MCF 10A (cell line): ENCODE measurements at regions of chr22 and their contacts with region 1.

Region 1: DNA sequence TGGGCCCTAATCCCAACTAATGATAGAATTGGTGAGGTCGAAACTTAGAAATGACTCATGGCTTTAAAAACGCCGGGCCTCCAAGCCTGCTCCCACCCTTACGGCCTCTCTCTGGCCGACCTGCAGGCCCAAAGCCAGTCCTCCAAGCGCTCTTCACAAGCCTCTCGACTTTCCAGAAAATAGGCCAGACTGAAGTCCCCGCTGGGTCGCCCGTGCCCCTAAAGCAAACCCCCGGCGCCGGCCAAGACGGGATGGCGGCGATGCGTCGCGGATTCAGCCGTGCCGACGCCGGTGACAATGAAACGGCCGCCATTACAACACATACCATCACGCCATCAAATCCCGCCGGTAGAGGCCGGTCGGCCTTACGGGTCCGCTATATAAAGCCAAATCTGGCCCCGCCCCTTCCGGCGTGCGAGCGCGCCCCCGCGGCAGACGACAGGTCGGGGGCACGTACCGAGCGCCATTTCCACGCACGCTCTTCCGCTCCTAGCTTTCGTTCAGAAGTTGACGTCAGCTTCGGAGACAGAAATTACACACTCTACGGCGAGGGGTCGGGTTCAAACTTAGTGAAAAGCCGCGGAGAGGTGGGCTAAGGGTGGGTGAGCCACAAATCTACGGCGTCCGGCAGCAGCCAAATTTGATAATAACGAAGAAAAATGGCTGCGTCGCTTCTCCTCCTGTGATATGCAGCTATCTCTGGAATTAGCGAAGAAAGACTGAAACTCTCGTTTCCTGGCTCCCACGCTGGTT is at the start of gene RPL3:
- DNase-seq: peak; percentile 98
- H3K4me3 Mint-ChIP-seq: peak within 1 kb of the TSS; percentile 99
- H3K27ac Mint-ChIP-seq: peak within 1 kb of the TSS; percentile 100
- H3K4me1 Mint-ChIP-seq: peaks cover 17% of the 10 kb centered on the region
- H3K27me3 Mint-ChIP-seq: no peaks in the 10 kb centered on the region
- CTCF ChIP-seq: no peak
- total RNA-seq, gene RPL3: 3,475 and 3,632 TPM in 2 replicates

Region 2: DNA sequence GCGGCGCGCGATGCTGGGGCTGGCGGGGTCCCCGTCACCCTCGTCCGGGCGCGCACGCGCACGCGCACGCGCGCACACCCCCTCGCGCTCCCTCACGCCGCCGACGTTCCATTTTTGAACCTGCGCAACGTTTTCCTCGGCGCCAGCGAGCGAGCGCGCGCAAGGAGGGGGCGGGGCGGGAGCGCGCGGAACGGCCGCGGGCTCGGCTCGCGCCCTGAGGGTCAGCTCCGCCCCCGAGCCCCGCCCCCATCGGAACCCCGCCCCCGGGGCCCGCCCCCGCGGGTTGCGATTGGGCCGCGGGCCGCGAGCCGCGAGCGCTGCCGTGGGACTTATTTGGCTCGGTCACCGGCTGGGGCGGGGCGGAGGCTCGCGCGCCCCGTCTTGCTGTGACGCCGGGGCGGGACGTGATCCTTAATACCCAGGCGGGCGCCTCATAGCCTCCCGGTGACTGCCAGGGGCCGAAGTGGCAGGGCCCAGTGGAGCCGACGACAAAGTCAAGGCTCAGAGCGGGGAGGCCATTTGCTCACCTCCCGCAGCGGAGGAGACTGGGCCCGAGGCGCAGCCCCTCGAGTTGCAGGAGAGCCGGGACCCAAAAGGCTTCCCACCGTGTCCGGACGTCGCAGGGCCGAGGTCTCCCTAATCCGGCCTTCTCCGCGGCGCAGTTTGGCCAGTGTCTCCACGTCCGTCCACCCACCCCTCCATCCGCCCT is 166.8 kb before region 1 on chr22 and contains the start of gene CBX7:
- CTCF ChIA-PET with region 1: interaction called, 4 read pairs
- POLR2A ChIA-PET with region 1: interaction called, 64 read pairs
- intact Hi-C with region 1: no loop called
- DNase-seq: peak; percentile 76
- H3K4me3 Mint-ChIP-seq: peak within 1 kb of the TSS; percentile 72
- H3K27ac Mint-ChIP-seq: no peak within 1 kb of the TSS
- H3K4me1 Mint-ChIP-seq: no peaks in the 10 kb centered on the region
- H3K27me3 Mint-ChIP-seq: peaks cover 36% of the 10 kb centered on the region
- CTCF ChIP-seq: no peak
- total RNA-seq, gene CBX7: 5.3 and 6.2 TPM in 2 replicates

Region 3: DNA sequence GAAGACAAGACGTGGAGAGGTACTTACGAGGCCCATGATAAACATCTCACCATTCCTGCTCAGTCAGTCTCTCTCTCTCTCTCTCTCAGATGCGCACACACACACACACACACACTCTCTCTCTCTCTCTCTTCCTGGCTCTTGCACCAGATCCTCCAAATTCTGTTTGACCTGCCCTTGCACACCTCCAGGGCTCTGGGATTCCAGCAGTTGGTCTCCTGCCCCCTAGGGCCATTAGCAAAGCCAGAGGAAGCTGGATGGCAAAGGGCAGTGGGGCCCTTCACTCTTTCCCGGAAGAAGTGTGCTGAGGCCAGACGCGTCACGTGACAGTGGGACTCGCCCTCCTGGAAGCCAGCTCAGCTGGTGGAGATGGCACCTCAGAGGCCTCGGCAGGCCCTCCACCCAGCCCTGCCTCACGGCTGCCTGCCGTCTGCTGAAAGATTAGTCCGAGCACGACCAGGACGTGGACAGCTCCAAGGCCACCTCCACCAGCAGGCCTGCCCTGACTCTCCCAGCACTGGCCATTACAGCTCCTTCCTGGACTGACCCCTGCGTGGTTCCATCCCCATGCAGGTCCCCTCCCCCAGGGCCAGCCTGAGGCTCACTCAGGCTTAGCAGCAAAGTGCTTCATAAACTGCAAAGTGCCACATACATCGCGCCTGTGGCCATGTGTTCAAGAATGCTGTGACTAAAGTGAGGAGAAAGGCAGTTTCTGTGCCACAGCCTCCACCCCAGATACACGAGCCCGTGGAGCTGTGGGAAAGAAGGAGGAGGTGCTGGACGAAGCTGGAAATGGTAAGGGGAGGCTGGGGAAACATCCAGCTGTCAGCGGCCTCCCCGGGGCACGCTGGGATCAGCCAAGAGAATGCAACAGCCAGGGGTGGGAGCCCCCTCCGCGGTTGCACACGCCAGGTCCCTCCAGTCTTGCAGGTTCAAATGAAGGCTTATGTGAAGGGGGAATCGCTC is 78.3 kb before region 1 on chr22:
- CTCF ChIA-PET with region 1: interaction called, 3 read pairs
- POLR2A ChIA-PET with region 1: interaction called, 36 read pairs
- intact Hi-C with region 1: no loop called
- DNase-seq: no peak
- H3K4me3 Mint-ChIP-seq: peak overlapping the region; percentile 45
- H3K27ac Mint-ChIP-seq: no peak overlapping the region
- H3K4me1 Mint-ChIP-seq: peaks cover 37% of the 10 kb centered on the region
- H3K27me3 Mint-ChIP-seq: peaks cover 34% of the 10 kb centered on the region
- CTCF ChIP-seq: no peak

Region 4: DNA sequence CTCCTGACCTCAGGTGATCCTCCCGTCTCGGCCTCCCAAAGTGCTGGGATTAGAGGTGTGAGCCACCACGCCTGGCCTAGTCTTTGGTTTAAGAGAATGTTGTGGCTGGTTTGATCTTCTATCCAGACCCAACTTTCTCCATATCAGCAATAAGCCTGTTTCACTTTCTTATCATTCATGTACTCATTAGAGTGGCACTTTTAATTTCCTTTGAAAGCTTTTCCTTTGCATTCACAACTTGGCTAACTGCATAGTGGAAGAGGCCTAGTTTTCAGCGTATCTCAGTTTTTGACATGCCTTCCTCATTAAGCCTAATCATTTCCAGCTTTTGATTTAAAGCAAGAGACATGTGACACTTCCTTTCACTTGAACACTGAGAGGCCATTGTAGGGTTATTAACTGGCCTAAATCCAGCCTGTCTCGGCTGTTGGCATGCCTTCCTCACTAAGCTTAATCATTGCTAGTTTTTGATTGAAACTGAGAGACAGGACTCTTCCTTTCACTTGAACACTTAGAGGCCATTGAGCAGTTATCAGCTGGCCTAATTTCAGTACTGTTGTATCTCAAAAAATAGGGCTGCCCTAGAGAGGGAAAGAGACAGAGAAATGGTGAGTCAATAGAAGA is 13.1 kb after region 1 on chr22:
- CTCF ChIA-PET with region 1: interaction called, 3 read pairs
- POLR2A ChIA-PET with region 1: interaction called, 36 read pairs
- intact Hi-C with region 1: no loop called
- DNase-seq: no peak
- H3K4me3 Mint-ChIP-seq: no peak overlapping the region
- H3K27ac Mint-ChIP-seq: no peak overlapping the region
- H3K4me1 Mint-ChIP-seq: no peaks in the 10 kb centered on the region
- H3K27me3 Mint-ChIP-seq: no peaks in the 10 kb centered on the region
- CTCF ChIP-seq: no peak

Region 5: DNA sequence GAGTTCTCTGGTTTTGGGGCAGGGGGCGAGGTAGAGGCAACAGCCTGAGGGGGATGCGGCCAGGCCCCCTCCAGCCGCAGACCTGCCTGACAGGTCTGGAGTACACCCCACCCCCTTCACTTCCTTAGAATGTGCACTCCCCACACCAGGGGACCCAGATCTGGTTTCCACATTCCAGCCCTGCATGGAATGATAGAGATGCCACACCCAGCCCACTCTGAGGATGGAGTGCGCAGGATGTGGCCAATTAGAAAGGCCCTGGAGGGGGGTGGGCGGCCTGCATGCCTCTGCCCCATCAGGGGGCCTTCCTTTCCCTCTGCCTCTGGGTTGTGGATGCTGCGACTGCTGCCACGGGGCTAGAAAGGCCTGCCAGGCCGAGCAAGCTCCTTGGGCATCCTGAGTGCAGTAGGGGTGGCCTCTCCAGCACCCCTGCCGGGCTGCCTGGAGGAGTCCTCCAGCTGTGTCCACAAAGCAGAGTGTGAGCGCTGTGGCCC is 109.2 kb after region 1 on chr22:
- CTCF ChIA-PET with region 1: no interaction called
- POLR2A ChIA-PET with region 1: no interaction called
- intact Hi-C with region 1: no loop called
- DNase-seq: no peak
- H3K4me3 Mint-ChIP-seq: no peak overlapping the region
- H3K27ac Mint-ChIP-seq: no peak overlapping the region
- H3K4me1 Mint-ChIP-seq: no peaks in the 10 kb centered on the region
- H3K27me3 Mint-ChIP-seq: no peaks in the 10 kb centered on the region
- CTCF ChIP-seq: no peak

Region 6: DNA sequence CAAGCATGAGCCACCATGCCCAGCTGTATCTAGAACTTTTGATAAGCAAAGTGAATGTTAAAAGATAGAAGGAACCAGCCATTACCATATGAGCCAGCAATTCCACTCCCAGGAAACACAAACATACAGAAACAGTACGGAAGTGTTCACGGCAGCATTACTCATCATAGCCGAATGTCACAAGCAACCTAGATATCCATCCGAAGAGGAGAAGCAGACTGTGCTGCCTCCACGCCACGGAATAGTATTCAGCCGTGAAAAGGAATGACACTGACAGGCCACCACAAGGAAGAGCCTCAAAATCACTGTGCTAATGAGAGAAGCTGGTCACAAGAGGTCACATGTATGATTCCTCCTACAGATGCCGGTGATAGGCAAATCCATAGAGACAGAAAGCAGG is 119.7 kb after region 1 on chr22:
- CTCF ChIA-PET with region 1: no interaction called
- POLR2A ChIA-PET with region 1: no interaction called
- intact Hi-C with region 1: no loop called
- DNase-seq: peak; percentile 54
- H3K4me3 Mint-ChIP-seq: no peak overlapping the region
- H3K27ac Mint-ChIP-seq: peak overlapping the region; percentile 7
- H3K4me1 Mint-ChIP-seq: peaks cover 8% of the 10 kb centered on the region
- H3K27me3 Mint-ChIP-seq: no peaks in the 10 kb centered on the region
- CTCF ChIP-seq: no peak

Region 7: GRCh38 chr22:39502109-39502788 is 182.8 kb after region 1 on chr22 and contains the start of gene MIEF1:
- CTCF ChIA-PET with region 1: no interaction called
- POLR2A ChIA-PET with region 1: interaction called, 41 read pairs
- intact Hi-C with region 1: no loop called
- DNase-seq: peak; percentile 96
- H3K4me3 Mint-ChIP-seq: peak within 1 kb of the TSS; percentile 79
- H3K27ac Mint-ChIP-seq: peak within 1 kb of the TSS; percentile 59
- H3K4me1 Mint-ChIP-seq: peaks cover 24% of the 10 kb centered on the region
- H3K27me3 Mint-ChIP-seq: no peaks in the 10 kb centered on the region
- CTCF ChIP-seq: no peak
- total RNA-seq, gene MIEF1: 37.0 and 40.2 TPM in 2 replicates

Region 8: DNA sequence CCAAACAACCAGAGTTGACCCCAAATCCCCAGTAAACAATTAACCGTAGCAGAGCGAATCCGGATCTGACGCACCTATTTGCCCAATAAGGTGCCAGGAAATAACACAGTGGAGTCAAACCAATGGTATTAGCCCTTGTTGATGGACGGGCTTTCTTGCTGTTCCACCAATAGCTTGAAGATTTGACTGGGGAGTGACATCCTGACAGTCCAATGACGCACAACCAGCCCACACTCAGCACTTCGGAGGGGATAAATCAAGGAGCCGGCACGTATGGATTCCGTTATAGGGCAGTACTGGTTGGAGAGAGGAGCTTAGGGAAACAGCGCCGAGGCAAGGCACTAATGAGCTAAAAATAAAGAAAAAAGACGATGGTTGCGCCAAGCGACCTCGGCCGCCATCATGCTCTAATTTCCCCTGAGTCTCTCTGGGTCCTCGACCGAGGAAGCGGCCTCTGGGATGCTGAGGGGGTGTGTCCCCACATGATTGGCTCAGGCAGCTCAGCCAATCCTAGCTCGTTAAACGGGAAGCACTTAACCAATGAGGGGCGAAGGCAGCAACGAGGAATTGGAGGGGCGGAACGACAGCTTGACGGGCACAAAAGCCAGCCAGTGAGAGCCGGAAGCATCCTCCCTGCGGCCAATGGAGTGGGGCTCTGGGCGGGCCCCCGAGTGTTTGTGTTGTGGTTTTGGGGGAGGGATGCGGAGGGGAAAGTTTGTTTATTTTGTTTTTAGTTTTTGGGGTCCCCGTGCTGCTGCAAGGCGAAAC is 724.8 kb after region 1 on chr22:
- CTCF ChIA-PET with region 1: interaction called, 3 read pairs
- POLR2A ChIA-PET with region 1: interaction called, 15 read pairs
- intact Hi-C with region 1: no loop called
- DNase-seq: peak; percentile 99
- H3K4me3 Mint-ChIP-seq: peak overlapping the region; percentile 87
- H3K27ac Mint-ChIP-seq: peak overlapping the region; percentile 95
- H3K4me1 Mint-ChIP-seq: peaks cover 52% of the 10 kb centered on the region
- H3K27me3 Mint-ChIP-seq: no peaks in the 10 kb centered on the region
- CTCF ChIP-seq: no peak